Panc1 (cell line): ENCODE measurements at regions of chr6 and their contacts with region 1.

Region 1: DNA sequence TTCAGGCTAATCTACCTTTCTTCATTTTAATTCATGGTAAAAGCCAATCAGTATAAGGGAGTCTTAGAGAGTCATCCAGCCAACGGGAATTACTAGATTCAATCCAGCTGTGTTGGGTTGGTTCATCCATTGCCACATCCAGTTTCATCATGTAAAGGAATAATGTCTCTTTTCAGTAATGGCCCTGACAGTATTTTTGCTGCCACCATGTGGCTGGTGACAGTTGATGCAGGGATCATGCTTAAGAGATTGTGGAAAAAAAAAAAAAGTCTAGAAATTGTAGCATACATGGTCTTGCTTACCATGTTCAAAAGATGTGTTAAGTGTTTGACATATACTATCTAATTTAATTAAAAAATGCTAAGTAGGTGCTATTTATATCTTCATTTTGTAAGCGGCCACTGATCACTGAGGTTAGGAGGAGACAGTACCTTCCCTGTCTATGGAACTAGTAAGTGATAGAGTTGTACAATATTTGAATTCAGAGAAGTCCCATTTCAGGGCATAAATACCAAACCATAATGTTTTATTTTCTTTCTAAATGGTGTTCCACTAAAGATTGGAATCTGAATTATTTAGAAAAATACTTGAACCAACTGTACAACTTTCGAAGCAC is 135.9 kb downstream of the KHDRBS2 start:
- DNase-seq: peak; percentile 28
- ATAC-seq: peak; percentile 80
- H3K4me3 ChIP-seq: no peak overlapping the region
- H3K27ac ChIP-seq: no peak overlapping the region
- H3K4me1 ChIP-seq: no peaks in the 10 kb centered on the region
- H3K27me3 ChIP-seq: no peaks in the 10 kb centered on the region
- CTCF ChIP-seq: peak; percentile 86

Region 2: GRCh38 chr6:61809004-61809595 is 341.1 kb before region 1 on chr6:
- CTCF ChIA-PET with region 1: no interaction called
- POLR2A ChIA-PET with region 1: no interaction called
- in situ Hi-C with region 1: no loop called
- intact Hi-C with region 1: loop called (anchors 1 kb)
- DNase-seq: peak; percentile 43
- ATAC-seq: no peak
- H3K4me3 ChIP-seq: no peak overlapping the region
- H3K27ac ChIP-seq: no peak overlapping the region
- H3K4me1 ChIP-seq: no peaks in the 10 kb centered on the region
- H3K27me3 ChIP-seq: no peaks in the 10 kb centered on the region
- CTCF ChIP-seq: peak; percentile 70; the same call in 1 of the 2 replicates

Region 3: DNA sequence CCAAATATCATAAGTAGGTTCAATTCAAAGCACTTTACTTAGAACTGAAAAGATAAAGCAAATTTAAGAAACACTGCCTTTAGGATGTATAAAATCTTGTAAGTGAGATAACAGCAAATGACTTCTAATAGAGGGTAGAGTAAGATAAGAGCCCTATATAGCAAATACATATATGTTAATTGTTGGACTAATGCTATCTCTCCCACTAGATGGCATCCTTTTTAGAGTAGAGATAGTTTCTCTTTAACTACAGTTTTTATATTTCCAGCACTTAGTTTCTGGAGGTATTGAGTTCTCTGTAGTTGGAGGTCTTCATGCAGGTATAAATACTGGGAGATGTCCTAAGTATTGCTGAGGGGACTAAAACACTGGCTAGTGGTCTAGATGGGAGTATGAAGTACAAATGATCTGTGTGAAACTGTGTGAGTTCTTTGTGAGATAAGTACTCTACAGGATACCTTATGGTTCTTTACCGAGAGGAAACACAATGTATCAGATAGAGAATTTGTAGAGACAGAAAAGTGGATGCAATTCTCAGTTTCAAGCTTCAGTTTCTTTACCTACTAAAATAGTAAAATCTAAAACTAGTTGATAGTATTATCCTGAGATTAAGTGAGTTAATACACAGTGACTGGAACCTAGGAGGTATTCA is 263.4 kb before region 1 on chr6:
- CTCF ChIA-PET with region 1: no interaction called
- POLR2A ChIA-PET with region 1: no interaction called
- in situ Hi-C with region 1: no loop called
- intact Hi-C with region 1: loop called (anchors 10 kb)
- DNase-seq: no peak
- ATAC-seq: no peak
- H3K4me3 ChIP-seq: no peak overlapping the region
- H3K27ac ChIP-seq: no peak overlapping the region
- H3K4me1 ChIP-seq: no peaks in the 10 kb centered on the region
- H3K27me3 ChIP-seq: no peaks in the 10 kb centered on the region
- CTCF ChIP-seq: peak; percentile 11; the same call in 1 of the 2 replicates

Region 4: DNA sequence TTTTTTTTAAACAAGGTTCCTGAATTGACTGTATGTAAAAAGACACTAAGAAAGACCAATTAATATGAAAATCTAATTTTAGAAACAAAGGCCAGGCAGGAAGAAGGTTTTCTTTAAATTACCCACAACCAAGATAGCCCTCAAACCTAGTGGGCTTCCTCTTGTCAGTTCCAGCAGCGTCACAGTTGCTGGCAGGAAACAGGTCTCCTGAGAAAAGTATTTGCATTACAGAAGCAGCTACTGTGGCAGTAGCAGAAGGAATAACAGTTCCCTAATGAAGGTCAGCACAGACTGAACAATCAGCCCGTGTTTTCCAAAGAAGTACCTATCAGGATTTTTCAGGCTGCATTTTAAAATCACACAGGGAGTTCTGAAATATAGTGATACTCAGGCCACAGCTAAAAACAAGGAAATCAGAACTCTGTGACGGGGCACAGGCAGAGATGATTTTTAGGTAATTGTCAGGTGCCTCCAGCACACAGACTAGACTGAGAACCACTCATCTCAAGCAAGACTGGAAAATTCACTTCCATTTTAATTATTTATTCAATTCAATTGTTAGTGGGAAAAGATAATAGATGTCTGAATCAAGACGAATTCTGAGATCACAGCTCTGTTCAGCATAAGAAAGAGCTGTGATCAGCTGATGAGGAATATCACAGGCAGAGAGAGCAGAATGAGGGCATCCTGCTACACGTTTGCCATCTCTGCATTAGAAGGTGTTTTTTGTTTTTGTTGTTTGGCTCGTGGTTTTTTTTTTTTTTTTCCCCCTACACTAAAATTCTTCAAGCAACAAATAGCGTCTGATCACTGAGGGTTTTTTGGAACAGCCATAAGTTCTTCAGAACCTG is 366.4 kb after region 1 on chr6:
- CTCF ChIA-PET with region 1: no interaction called
- POLR2A ChIA-PET with region 1: no interaction called
- in situ Hi-C with region 1: no loop called
- intact Hi-C with region 1: no loop called
- DNase-seq: no peak
- ATAC-seq: no peak
- H3K4me3 ChIP-seq: no peak overlapping the region
- H3K27ac ChIP-seq: no peak overlapping the region
- H3K4me1 ChIP-seq: no peaks in the 10 kb centered on the region
- H3K27me3 ChIP-seq: no peaks in the 10 kb centered on the region
- CTCF ChIP-seq: no peak